ENCODE measurements at regions of chr7 and their contacts with region 1.

Region 1: GRCh38 chr7:87188930-87189329 is 30.6 kb downstream of the TMEM243 start:
- DNase-seq: no peak
- ATAC-seq: no peak
- H3K4me3 ChIP-seq: no peak overlapping the region
- H3K4me3 Mint-ChIP-seq: no peak overlapping the region
- H3K27ac ChIP-seq: peak overlapping the region in 1 of 2 donors; percentile 33
- H3K27ac Mint-ChIP-seq: peak overlapping the region; percentile 78
- H3K4me1 ChIP-seq: no peaks in the 10 kb centered on the region
- H3K4me1 Mint-ChIP-seq: peaks cover 29% of the 10 kb centered on the region
- H3K27me3 ChIP-seq: no peaks in the 10 kb centered on the region
- H3K27me3 Mint-ChIP-seq: no peaks in the 10 kb centered on the region
- CTCF ChIP-seq: no peak

Region 2: DNA sequence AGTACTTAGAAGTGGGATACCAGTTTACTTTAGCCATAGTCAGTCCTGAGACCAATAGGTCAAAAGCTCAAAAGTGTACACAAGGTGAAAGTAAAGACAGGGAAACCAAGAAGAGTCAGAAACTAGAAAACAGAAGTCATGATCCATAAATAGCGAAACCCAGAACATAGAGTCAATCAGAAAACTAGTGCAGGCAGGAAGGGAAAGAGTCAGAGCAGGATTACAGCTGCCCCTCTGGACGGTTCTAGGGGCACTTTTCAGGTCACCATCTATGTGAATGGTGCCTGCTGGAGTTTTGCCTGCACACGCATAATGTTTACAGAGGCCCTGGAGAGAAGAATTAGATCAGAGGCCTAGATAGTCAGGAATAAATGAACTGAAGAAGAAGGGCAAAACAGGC is 59.1 kb before region 1 on chr7:
- CTCF ChIA-PET with region 1: no interaction called
- POLR2A ChIA-PET with region 1: no interaction called
- intact Hi-C with region 1: no loop called
- DNase-seq: no peak
- ATAC-seq: no peak
- H3K4me3 ChIP-seq: no peak overlapping the region
- H3K4me3 Mint-ChIP-seq: no peak overlapping the region
- H3K27ac ChIP-seq: no peak overlapping the region
- H3K27ac Mint-ChIP-seq: no peak overlapping the region
- H3K4me1 ChIP-seq: peaks cover 0 to 5% of the 10 kb centered on the region in 2 donors
- H3K4me1 Mint-ChIP-seq: peaks cover 6% of the 10 kb centered on the region
- H3K27me3 ChIP-seq: no peaks in the 10 kb centered on the region
- H3K27me3 Mint-ChIP-seq: peaks cover 4% of the 10 kb centered on the region
- CTCF ChIP-seq: no peak

Region 3: DNA sequence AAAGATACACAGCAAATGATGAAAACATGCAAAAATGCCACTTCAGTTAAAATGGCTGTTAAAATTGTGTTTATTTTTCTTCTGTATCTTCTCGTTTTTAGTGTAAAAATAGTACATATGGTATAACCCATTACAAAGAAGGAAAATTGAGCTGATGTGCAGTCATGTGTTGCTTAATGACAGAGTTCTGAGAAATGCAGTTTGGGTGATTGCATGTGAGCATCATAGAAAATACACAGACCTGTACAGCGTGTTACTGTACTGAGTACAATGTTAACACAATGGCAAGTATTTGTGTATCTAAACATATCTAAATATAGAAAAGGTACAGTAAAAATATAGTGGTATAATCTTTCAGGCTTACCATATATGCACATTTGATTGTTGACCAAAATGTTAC is 29.4 kb before region 1 on chr7:
- CTCF ChIA-PET with region 1: no interaction called
- POLR2A ChIA-PET with region 1: no interaction called
- intact Hi-C with region 1: loop called (anchors 5 kb)
- DNase-seq: no peak
- ATAC-seq: no peak
- H3K4me3 ChIP-seq: no peak overlapping the region
- H3K4me3 Mint-ChIP-seq: no peak overlapping the region
- H3K27ac ChIP-seq: peak overlapping the region in 1 of 2 donors; percentile 29
- H3K27ac Mint-ChIP-seq: no peak overlapping the region
- H3K4me1 ChIP-seq: peaks cover 10 to 39% of the 10 kb centered on the region in 2 donors
- H3K4me1 Mint-ChIP-seq: peaks cover 60% of the 10 kb centered on the region
- H3K27me3 ChIP-seq: no peaks in the 10 kb centered on the region
- H3K27me3 Mint-ChIP-seq: no peaks in the 10 kb centered on the region
- CTCF ChIP-seq: no peak

Region 4: GRCh38 chr7:87199700-87200450 is 10.9 kb after region 1 on chr7:
- CTCF ChIA-PET with region 1: interaction called, 4 read pairs
- POLR2A ChIA-PET with region 1: no interaction called
- intact Hi-C with region 1: loop called (anchors 2 kb)
- DNase-seq: no peak
- ATAC-seq: no peak
- H3K4me3 ChIP-seq: no peak overlapping the region
- H3K4me3 Mint-ChIP-seq: peak overlapping the region; percentile 5
- H3K27ac ChIP-seq: peak overlapping the region in 1 of 2 donors; percentile 77
- H3K27ac Mint-ChIP-seq: peak overlapping the region; percentile 37
- H3K4me1 ChIP-seq: peaks cover 33 to 51% of the 10 kb centered on the region in 2 donors
- H3K4me1 Mint-ChIP-seq: peaks cover 79% of the 10 kb centered on the region
- H3K27me3 ChIP-seq: no peaks in the 10 kb centered on the region
- H3K27me3 Mint-ChIP-seq: no peaks in the 10 kb centered on the region
- CTCF ChIP-seq: no peak

Measured in B cell (primary cell).